ENCODE measurements at regions of chr17 and their contacts with region 1.

Region 1: GRCh38 chr17:28598799-28599310 is at the start of gene SPAG5:
- DNase-seq: peak; percentile 96
- H3K4me3 ChIP-seq: peak within 1 kb of the TSS; percentile 82
- H3K27ac ChIP-seq: peak within 1 kb of the TSS; percentile 73
- H3K4me1 ChIP-seq: peaks cover 23% of the 10 kb centered on the region
- CTCF ChIP-seq: no peak
- total RNA-seq, gene SPAG5: 161 and 163 TPM in 2 replicates

Region 2: DNA sequence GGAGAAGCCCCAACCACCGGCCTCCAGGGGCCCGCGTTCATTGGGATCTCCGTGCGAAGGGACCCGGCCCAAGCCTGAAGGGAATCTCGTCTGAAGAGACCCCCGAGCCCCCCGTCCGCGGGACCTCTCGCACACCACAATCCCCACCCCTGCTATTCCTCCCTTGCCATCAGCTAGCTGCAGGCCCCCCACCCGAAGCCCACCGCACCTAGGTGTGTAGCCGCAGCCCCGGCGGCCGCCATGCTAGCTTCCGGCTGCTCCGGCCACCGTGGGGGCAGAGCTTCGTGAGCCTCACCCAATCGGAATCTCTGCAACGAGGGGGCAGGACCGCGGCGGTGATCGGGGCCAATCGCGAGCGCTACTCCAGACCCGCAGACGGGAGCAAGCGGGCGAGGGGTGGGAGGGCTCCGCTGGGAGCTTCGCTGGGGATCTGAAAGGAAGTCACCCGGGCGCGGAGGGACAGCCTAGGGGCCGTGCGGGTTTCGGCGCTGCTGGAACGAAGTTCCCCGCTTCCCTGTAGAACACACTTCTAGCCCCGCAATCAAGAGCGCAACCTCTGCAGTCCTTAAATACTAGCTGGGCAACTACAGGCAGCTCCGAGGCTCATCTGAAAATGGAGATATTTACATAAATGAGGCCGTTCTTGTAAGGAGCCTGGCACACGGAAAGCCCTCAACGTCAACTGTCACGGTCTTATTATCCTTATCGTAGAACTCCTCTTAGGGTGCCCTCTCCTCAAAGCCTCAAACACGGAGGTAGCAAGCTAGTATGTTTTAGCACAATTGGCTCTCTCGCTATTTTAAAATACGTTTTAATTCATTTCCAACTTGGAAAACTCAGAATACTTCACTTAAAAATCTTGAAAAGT is 27.4 kb before region 1 on chr17 and contains the start of gene PIGS:
- CTCF ChIA-PET with region 1: no interaction called
- POLR2A ChIA-PET with region 1: interaction called, 12 read pairs
- intact Hi-C with region 1: loop called (anchors 2 kb)
- DNase-seq: peak; percentile 93
- H3K4me3 ChIP-seq: peak within 1 kb of the TSS; percentile 94
- H3K27ac ChIP-seq: peak within 1 kb of the TSS; percentile 20
- H3K4me1 ChIP-seq: peaks cover 36% of the 10 kb centered on the region
- CTCF ChIP-seq: no peak
- total RNA-seq, gene PIGS: 13.9 and 23.7 TPM in 2 replicates

Region 3: DNA sequence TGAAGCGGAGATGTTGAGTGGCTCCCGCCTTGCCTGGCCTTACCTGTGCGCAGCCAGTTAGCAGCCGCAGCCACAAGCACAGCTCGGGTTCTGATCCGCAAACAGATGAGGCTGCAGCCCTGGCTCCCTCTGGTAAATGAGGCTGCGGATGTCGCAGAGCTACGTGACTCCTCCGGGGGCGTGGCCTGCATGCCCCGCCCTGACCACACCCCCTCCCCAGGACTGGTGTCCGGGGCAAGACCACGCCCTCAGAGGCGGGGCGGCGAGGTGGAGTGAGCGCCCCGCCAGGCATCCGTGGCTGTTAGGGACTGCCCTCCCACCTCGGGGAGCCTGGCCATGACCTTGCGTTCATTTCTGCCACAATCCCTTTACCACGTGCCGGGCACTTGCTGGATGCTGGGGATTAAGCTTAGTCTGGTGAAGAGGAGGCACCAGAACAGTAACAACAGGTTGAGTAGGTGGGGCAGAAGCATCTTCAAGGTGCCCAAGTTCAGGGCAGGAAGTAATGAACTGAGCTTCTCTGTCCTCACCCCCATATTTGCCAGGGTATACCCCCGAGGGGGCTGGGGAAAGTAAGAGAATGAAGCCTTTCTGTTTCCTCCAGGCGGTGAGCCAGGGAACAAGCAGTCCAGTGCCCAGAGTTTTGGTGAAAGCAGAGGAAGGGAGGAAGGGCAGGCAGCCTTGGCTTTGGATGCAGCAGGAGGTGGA is 21.9 kb before region 1 on chr17 and contains the start of gene ALDOC:
- CTCF ChIA-PET with region 1: interaction called, 3 read pairs
- POLR2A ChIA-PET with region 1: interaction called, 12 read pairs
- intact Hi-C with region 1: no loop called
- DNase-seq: peak; percentile 99
- H3K4me3 ChIP-seq: peak within 1 kb of the TSS; percentile 34
- H3K27ac ChIP-seq: peak within 1 kb of the TSS; percentile 58
- H3K4me1 ChIP-seq: peaks cover 17% of the 10 kb centered on the region
- CTCF ChIP-seq: no peak
- total RNA-seq, gene ALDOC: 62.4 and 70.7 TPM in 2 replicates

Region 4: DNA sequence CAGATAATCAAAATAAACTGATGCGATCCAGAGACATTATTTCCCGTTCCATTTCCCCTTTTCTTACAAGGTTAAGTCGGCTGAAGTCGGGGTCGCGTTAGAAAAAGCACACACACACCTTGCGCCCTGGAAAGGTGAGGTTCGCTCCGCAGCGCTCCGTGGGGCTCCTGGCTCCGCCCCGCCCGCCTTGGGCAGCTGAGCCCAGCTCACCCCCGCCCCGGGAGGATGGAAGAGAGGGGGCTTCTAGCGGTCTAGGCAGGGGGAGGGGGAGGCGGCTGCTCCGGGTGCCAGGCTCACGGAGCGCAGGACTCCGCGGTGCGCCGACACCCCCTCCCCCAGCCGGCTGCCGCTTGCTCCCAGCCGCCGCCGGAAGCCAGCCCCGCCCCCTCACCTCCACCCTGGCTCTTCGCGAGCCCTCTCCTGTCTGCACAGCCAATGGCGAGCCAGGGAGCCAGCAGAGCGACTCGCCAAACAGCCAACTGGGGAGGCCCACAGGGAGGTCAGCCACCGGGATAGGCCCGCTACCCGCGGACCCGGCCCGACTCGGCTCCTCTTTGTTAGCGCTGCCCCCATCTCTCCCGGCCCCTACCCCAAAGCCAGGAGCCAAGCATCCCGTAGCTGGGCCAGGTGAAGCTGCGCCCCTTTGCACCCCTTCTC is 213.4 kb after region 1 on chr17:
- CTCF ChIA-PET with region 1: no interaction called
- POLR2A ChIA-PET with region 1: no interaction called
- intact Hi-C with region 1: no loop called
- DNase-seq: peak; percentile 97
- H3K4me3 ChIP-seq: peak overlapping the region; percentile 75
- H3K27ac ChIP-seq: peak overlapping the region; percentile 70
- H3K4me1 ChIP-seq: peaks cover 33% of the 10 kb centered on the region
- CTCF ChIP-seq: no peak